Aorta (tissue), 5 donors: ENCODE measurements at regions of chr16 and their contacts with region 1.

Region 1: GRCh38 chr16:22346483-22346882 is 27.9 kb downstream of the CDR2 start:
- DNase-seq: no peak
- ATAC-seq: no peak
- H3K4me3 ChIP-seq: no peak overlapping the region
- H3K27ac ChIP-seq: peak overlapping the region in 1 of 2 donors; percentile 1
- H3K4me1 ChIP-seq: peaks cover 0 to 2% of the 10 kb centered on the region in 2 donors
- H3K27me3 ChIP-seq: no peaks in the 10 kb centered on the region

Region 2: GRCh38 chr16:22417019-22417418 is 70.5 kb after region 1 on chr16:
- intact Hi-C with region 1: loop called in 1 of 2 experiments (anchors 10 kb)
- DNase-seq: no peak
- ATAC-seq: no peak
- H3K4me3 ChIP-seq: no peak overlapping the region
- H3K27ac ChIP-seq: no peak overlapping the region
- H3K4me1 ChIP-seq: no peaks in the 10 kb centered on the region
- H3K27me3 ChIP-seq: no peaks in the 10 kb centered on the region

Region 3: DNA sequence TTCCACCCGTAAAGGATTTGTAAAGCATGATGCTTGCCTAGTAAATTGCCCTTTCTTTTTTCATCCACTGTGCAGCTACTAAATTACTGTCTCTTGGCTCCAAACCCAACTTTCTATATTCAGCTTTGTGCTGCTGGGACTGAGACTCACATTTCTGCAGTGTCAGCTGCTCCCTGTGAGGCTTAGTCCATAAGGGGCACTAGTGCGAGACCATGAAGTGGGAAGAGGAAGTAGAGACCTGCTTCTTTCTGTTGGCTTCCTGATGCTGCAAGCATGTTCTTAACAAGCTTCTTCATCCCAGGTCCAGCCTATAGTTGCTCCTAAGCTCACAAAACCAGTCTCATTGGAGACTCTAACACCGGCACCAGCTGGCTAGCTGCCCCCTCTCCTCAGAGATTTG is 392.6 kb after region 1 on chr16:
- intact Hi-C with region 1: no loop called
- DNase-seq: no peak
- ATAC-seq: no peak
- H3K4me3 ChIP-seq: no peak overlapping the region
- H3K27ac ChIP-seq: no peak overlapping the region
- H3K4me1 ChIP-seq: no peaks in the 10 kb centered on the region
- H3K27me3 ChIP-seq: no peaks in the 10 kb centered on the region